ENCODE measurements at regions of chr17 and their contacts with region 1.

Region 1: DNA sequence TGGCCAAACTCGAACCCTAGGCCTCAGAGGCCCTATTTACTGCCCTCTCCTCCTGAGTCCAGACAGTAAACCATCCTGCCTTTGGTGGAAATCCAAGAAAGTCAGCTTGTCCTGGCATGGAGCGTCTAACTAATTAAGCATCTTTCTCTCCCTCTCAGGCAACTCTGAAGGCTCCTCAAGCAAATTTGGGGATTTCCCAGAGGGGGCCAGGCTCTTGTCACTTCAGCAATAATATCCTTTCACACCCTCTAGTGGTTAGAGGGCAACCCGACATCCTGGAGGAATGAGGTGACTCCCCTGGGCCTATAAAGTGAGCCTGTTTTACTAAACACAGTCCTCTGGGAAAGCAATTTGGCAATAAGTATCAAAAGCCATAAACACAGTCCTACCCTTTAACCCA is 60.4 kb downstream of the NOG start:
- DNase-seq: peak; percentile 50 to 66 (median 55)
- H3K4me3 ChIP-seq: no peak overlapping the region
- H3K4me3 Mint-ChIP-seq: peak overlapping the region in 1 of 8 donors; percentile 44
- H3K27ac ChIP-seq: no peak overlapping the region
- H3K27ac Mint-ChIP-seq: peak overlapping the region in 1 of 7 donors; percentile 34
- H3K4me1 ChIP-seq: no peaks in the 10 kb centered on the region
- H3K4me1 Mint-ChIP-seq: peaks cover 0 to 2% (median under 1%) of the 10 kb centered on the region in 4 donors
- H3K27me3 ChIP-seq: no peaks in the 10 kb centered on the region
- H3K27me3 Mint-ChIP-seq: peaks cover 2 to 12% of the 10 kb centered on the region in 2 donors

Region 2: DNA sequence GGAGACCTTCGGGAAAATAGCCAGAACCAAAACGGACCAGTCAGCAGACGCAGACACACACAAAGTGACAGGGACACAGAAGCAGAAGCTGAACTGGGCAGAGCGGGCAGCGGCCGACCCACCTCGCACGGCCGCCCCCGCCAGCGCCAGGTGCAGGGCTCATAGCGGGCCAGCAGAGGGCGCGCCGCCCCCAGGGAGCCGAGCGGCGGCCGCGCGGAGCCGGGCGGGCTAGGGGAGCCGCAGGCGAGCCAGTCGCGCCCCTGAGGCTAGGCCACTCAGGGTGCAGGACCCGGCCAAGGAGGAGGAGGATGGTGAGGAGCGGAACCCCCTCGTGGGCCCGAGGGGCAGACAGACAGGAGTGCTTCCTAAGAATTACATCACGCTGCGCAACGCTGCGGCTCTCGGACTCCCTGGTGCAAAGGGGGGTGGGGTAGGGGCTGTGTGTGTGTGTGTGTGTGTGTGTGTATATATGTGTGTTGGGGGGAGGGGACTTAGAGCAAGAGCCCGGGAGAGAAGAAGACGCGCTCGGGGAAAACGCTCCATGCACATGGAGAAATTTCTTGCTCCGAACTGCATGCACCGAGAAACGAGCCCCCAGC is 61.3 kb before region 1 on chr17:
- CTCF ChIA-PET with region 1: interaction called, 6 read pairs
- POLR2A ChIA-PET with region 1: interaction called, 3 read pairs
- intact Hi-C with region 1: loop called (anchors 1 kb)
- DNase-seq: peak; percentile 50 to 61 (median 56)
- H3K4me3 ChIP-seq: peak overlapping the region; percentile 26 to 36
- H3K4me3 Mint-ChIP-seq: peak overlapping the region; percentile 73 to 89 (median 79)
- H3K27ac ChIP-seq: no peak overlapping the region
- H3K27ac Mint-ChIP-seq: peak overlapping the region in 1 of 7 donors; percentile 41
- H3K4me1 ChIP-seq: peaks cover 36% of the 10 kb centered on the region
- H3K4me1 Mint-ChIP-seq: peaks cover 11 to 41% (median 18%) of the 10 kb centered on the region in 4 donors
- H3K27me3 ChIP-seq: peaks cover 13% of the 10 kb centered on the region
- H3K27me3 Mint-ChIP-seq: peaks cover 28 to 46% of the 10 kb centered on the region in 2 donors

Region 3: DNA sequence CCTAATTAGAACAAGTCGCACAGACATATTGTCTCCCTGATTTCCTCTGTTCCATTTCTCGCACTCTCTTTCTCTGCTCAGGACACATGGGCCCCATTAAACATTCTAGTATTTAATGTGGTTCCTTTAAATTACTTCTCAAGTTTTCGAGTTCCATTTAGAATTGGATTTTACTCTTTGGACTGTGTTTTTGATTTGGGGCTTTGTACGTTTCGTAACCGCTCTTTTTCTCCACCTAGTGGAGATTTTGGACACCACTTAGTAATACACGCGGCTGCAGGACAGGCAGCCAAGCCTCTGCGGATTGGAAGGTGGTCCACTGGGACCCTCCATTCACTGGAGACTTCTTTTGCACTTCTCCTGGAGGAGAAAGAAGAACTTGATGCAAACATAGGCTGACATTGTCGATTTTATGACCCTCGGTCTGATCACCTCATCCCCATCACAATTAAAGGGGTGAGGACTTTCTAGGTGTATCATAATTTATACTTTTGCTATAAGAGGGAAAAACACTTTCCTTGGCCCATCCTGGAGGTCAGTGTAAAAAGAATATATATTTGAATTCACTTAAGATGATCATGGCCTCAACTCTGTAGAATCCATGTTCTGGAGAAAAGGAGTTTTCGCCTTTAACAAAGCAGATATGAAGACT is 25.4 kb after region 1 on chr17:
- CTCF ChIA-PET with region 1: no interaction called
- POLR2A ChIA-PET with region 1: no interaction called
- intact Hi-C with region 1: loop called (anchors 1 kb)
- DNase-seq: peak in 3 of 5 donors; percentile 8 to 15 (median 14)
- H3K4me3 ChIP-seq: no peak overlapping the region
- H3K4me3 Mint-ChIP-seq: peak overlapping the region; percentile 61 to 81 (median 75)
- H3K27ac ChIP-seq: no peak overlapping the region
- H3K27ac Mint-ChIP-seq: no peak overlapping the region
- H3K4me1 ChIP-seq: peaks cover 39% of the 10 kb centered on the region
- H3K4me1 Mint-ChIP-seq: peaks cover 17 to 21% (median 20%) of the 10 kb centered on the region in 4 donors
- H3K27me3 ChIP-seq: peaks cover 25% of the 10 kb centered on the region
- H3K27me3 Mint-ChIP-seq: peaks cover 46 to 48% of the 10 kb centered on the region in 2 donors

Measured in CD4-positive, alpha-beta memory T cell (primary cell).